ENCODE measurements at regions of chr14 and their contacts with region 1.

Region 1: DNA sequence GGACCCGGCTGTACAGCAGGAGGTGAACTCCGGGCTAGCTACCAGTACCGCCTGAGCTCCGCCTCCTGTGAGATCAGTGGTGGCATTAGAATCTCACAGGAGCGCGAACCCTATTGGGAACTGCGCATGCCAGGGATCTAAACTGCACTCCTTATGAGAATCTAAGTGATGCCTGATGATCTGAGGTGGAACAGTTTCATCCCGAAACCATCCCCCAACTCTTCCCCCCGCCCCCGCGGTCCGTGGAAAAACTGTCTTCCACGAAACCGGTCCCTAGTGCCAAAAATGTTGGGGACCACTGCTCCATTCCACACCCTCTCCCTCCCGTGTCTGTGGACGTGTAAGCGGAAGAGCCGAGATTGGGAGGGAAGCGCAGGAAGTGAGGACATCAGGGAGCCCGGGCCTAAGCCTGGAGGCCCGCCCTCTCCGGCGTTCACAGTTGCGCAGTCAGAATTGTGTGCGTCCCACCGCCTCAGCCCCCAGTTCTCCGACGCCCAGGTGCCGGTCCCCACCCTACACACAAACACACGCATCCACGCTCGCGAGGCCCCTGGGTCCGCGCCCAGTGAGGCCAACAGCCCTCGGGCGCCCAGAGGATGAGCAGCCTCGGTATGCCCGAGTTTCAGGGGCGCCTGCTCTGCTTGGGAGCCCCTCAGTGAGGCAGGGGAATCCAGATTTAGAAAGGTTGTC is 1.8 kb upstream of the RNASE4 start:
- DNase-seq: peak; percentile 82 to 88
- H3K4me3 ChIP-seq: peak overlapping the region; percentile 61
- H3K4me3 Mint-ChIP-seq: no peak overlapping the region
- H3K27ac Mint-ChIP-seq: no peak overlapping the region
- H3K4me1 ChIP-seq: peaks cover 16% of the 10 kb centered on the region
- H3K4me1 Mint-ChIP-seq: peaks cover 15% of the 10 kb centered on the region
- H3K27me3 ChIP-seq: no peaks in the 10 kb centered on the region
- H3K27me3 Mint-ChIP-seq: no peaks in the 10 kb centered on the region
- CTCF ChIP-seq: no peak

Region 2: GRCh38 chr14:20461274-20462001 is 221.1 kb before region 1 on chr14 and contains the start of gene PIP4P1:
- CTCF ChIA-PET with region 1: interaction called, 3 read pairs
- POLR2A ChIA-PET with region 1: interaction called, 9 read pairs
- intact Hi-C with region 1: loop called (anchors 2 kb)
- DNase-seq: peak; percentile 99 to 100
- H3K4me3 ChIP-seq: peak within 1 kb of the TSS; percentile 93
- H3K4me3 Mint-ChIP-seq: peak within 1 kb of the TSS; percentile 83
- H3K27ac Mint-ChIP-seq: peak within 1 kb of the TSS; percentile 96
- H3K4me1 ChIP-seq: peaks cover 16% of the 10 kb centered on the region
- H3K4me1 Mint-ChIP-seq: peaks cover 17% of the 10 kb centered on the region
- H3K27me3 ChIP-seq: no peaks in the 10 kb centered on the region
- H3K27me3 Mint-ChIP-seq: no peaks in the 10 kb centered on the region
- CTCF ChIP-seq: no peak
- total RNA-seq, gene PIP4P1: 39.6 and 46.2 TPM in 2 replicates

Region 3: GRCh38 chr14:20546877-20547276 is 135.7 kb before region 1 on chr14:
- CTCF ChIA-PET with region 1: no interaction called
- POLR2A ChIA-PET with region 1: no interaction called
- intact Hi-C with region 1: loop called (anchors 5 kb)
- DNase-seq: peak; percentile 78 to 81
- H3K4me3 ChIP-seq: no peak overlapping the region
- H3K4me3 Mint-ChIP-seq: peak overlapping the region; percentile 46
- H3K27ac Mint-ChIP-seq: peak overlapping the region; percentile 57
- H3K4me1 ChIP-seq: peaks cover 14% of the 10 kb centered on the region
- H3K4me1 Mint-ChIP-seq: peaks cover 15% of the 10 kb centered on the region
- H3K27me3 ChIP-seq: no peaks in the 10 kb centered on the region
- H3K27me3 Mint-ChIP-seq: no peaks in the 10 kb centered on the region
- CTCF ChIP-seq: no peak

Region 4: GRCh38 chr14:20613094-20614037 is 69.2 kb before region 1 on chr14:
- CTCF ChIA-PET with region 1: interaction called, 13 read pairs
- POLR2A ChIA-PET with region 1: interaction called, 4 read pairs
- intact Hi-C with region 1: loop called (anchors 1 kb)
- DNase-seq: peak; percentile 91 to 96
- H3K4me3 ChIP-seq: peak overlapping the region; percentile 66
- H3K4me3 Mint-ChIP-seq: no peak overlapping the region
- H3K27ac Mint-ChIP-seq: no peak overlapping the region
- H3K4me1 ChIP-seq: 0 out of 2 replicates have a peak, but pooled peaks cover 4% of the 10 kb centered on the region
- H3K4me1 Mint-ChIP-seq: peaks cover 22% of the 10 kb centered on the region
- H3K27me3 ChIP-seq: no peaks in the 10 kb centered on the region
- H3K27me3 Mint-ChIP-seq: no peaks in the 10 kb centered on the region
- CTCF ChIP-seq: peak; percentile 64 to 83

Region 5: GRCh38 chr14:20632682-20633428 is 49.7 kb before region 1 on chr14:
- CTCF ChIA-PET with region 1: interaction called, 9 read pairs
- POLR2A ChIA-PET with region 1: no interaction called
- intact Hi-C with region 1: loop called (anchors 1 kb)
- DNase-seq: peak; percentile 79 to 85
- H3K4me3 ChIP-seq: peak overlapping the region; percentile 38
- H3K4me3 Mint-ChIP-seq: peak overlapping the region; percentile 93
- H3K27ac Mint-ChIP-seq: peak overlapping the region; percentile 92
- H3K4me1 ChIP-seq: peaks cover 3% of the 10 kb centered on the region
- H3K4me1 Mint-ChIP-seq: peaks cover 24% of the 10 kb centered on the region
- H3K27me3 ChIP-seq: no peaks in the 10 kb centered on the region
- H3K27me3 Mint-ChIP-seq: peaks cover 3% of the 10 kb centered on the region
- CTCF ChIP-seq: no peak

Region 6: GRCh38 chr14:20657216-20658128 is 25.1 kb before region 1 on chr14:
- CTCF ChIA-PET with region 1: interaction called, 10 read pairs
- POLR2A ChIA-PET with region 1: no interaction called
- intact Hi-C with region 1: loop called (anchors 1 kb)
- DNase-seq: peak; percentile 77 to 80
- H3K4me3 ChIP-seq: no peak overlapping the region
- H3K4me3 Mint-ChIP-seq: peak overlapping the region; percentile 68
- H3K27ac Mint-ChIP-seq: no peak overlapping the region
- H3K4me1 ChIP-seq: peaks cover 6% of the 10 kb centered on the region; the same call in 1 of the 2 replicates
- H3K4me1 Mint-ChIP-seq: peaks cover 12% of the 10 kb centered on the region
- H3K27me3 ChIP-seq: no peaks in the 10 kb centered on the region
- H3K27me3 Mint-ChIP-seq: no peaks in the 10 kb centered on the region
- CTCF ChIP-seq: peak; percentile 53 to 81

Region 7: DNA sequence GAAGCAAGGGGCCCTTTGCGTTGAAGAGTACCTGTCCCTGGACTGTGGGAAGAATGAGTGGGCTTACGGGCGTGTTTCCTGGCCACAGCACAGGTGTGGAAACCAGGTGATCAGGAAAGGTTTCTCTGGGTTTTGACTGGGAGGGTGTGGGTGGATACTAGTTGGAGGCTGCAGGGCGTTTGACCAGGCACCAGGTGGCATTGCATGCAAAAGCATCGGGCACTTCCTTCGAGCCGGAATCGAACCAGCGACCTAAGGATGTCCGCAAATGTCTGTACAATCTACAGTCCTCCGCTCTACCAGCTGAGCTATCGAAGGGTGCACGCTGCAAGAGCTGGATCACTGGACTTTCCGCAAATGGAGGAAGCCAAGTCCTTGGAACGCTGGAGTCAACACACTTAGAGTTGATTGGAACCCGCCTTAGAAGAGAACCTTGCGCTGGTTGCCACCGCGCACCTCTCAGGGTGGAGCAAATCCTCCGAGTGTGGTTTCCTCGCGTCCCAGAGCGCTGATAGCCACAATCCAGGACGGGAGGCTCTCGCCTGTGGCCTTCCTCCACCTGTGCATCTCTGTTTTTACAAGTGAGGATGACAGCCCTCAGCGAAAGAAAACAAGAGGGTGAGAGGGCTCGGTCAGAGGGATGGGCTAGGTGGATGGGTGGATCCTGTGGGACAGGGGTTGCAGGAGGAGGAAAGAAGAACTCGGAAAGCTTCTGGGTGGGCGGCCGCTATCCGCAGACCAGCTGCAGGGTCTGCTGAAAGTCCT is 19.4 kb before region 1 on chr14:
- CTCF ChIA-PET with region 1: interaction called, 10 read pairs
- POLR2A ChIA-PET with region 1: no interaction called
- intact Hi-C with region 1: loop called (anchors 1 kb)
- DNase-seq: peak in 1 of 2 experiments; percentile 32
- H3K4me3 ChIP-seq: no peak overlapping the region
- H3K4me3 Mint-ChIP-seq: no peak overlapping the region
- H3K27ac Mint-ChIP-seq: no peak overlapping the region
- H3K4me1 ChIP-seq: peaks cover 7% of the 10 kb centered on the region; the same call in 1 of the 2 replicates
- H3K4me1 Mint-ChIP-seq: no peaks in the 10 kb centered on the region
- H3K27me3 ChIP-seq: no peaks in the 10 kb centered on the region
- H3K27me3 Mint-ChIP-seq: no peaks in the 10 kb centered on the region
- CTCF ChIP-seq: peak in 1 of 2 experiments; percentile 10

Measured in Caco-2 (cell line).